ENCODE measurements at regions of chr10 and their contacts with region 1.

Region 1: DNA sequence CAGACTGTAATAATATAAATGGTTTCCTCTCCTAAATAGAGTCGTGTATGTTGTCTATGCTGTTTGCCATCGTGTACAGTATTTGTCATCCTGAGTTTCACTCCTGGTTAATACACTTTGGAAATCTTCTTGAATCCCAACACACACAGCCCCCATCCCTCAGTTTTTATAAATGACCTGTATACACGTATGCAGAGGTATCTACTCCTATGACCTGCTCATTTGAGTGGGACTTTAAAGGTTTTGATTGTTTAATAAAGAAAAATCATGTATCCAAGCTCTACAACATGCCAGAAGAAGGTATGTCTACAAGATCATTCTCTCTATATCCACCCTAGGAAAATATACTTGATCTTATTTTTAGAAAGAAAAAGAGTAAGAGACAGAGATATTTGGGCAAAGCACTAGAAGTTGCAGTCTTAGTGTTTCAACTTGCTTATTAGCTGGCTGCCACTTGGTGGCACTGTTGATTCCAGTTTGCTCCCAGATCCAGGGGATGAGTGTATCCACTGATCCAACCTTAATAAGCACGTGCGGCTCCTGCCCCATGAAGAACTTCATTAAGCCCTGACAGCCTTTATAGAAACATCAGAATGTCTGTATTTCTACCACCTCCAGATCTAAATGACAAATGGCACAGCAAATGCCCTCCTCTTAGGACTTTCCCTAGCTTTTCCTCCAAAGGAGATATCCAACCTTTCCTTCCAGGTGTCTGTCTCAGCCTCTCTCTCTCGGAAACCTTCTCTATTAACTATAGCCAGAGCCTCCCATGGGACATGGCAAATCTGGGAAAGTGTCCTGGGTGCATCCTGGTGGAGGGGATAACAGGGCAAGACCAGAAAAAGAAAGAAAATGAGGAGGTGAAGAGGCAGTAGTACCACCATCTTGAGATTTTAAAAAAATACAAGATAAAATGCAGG is 181.6 kb upstream of the NEBL start:
- DNase-seq: peak; percentile 48
- H3K4me3 Mint-ChIP-seq: no peak overlapping the region
- H3K27ac Mint-ChIP-seq: no peak overlapping the region
- H3K4me1 Mint-ChIP-seq: no peaks in the 10 kb centered on the region
- H3K27me3 Mint-ChIP-seq: peaks cover 4% of the 10 kb centered on the region

Region 2: GRCh38 chr10:20948686-20949327 is 129.9 kb before region 1 on chr10:
- CTCF ChIA-PET with region 1: no interaction called
- POLR2A ChIA-PET with region 1: no interaction called
- intact Hi-C with region 1: no loop called
- DNase-seq: no peak
- H3K4me3 Mint-ChIP-seq: no peak overlapping the region
- H3K27ac Mint-ChIP-seq: no peak overlapping the region
- H3K4me1 Mint-ChIP-seq: no peaks in the 10 kb centered on the region
- H3K27me3 Mint-ChIP-seq: no peaks in the 10 kb centered on the region

Region 3: DNA sequence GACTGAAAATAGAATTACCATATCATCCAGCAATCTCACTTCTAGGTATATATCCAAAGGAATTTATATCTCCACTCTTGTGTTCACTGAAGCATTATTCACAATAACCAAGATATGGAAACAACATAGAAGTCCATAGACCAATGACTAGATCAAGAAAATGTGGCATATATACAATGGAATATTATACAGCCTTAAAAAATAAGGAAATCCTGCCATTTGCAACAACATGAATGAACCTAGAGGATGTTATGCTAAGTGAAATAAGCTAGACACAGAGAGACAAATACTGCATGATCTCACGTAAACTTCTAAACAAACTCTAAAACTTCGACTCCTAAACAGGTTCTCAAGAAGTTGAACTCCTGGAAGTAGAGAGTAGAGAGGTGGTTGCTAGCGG is 192.3 kb after region 1 on chr10:
- CTCF ChIA-PET with region 1: interaction called, 3 read pairs
- POLR2A ChIA-PET with region 1: no interaction called
- intact Hi-C with region 1: loop called (anchors 1 kb)
- DNase-seq: no peak
- H3K4me3 Mint-ChIP-seq: no peak overlapping the region
- H3K27ac Mint-ChIP-seq: no peak overlapping the region
- H3K4me1 Mint-ChIP-seq: no peaks in the 10 kb centered on the region
- H3K27me3 Mint-ChIP-seq: no peaks in the 10 kb centered on the region

Region 4: DNA sequence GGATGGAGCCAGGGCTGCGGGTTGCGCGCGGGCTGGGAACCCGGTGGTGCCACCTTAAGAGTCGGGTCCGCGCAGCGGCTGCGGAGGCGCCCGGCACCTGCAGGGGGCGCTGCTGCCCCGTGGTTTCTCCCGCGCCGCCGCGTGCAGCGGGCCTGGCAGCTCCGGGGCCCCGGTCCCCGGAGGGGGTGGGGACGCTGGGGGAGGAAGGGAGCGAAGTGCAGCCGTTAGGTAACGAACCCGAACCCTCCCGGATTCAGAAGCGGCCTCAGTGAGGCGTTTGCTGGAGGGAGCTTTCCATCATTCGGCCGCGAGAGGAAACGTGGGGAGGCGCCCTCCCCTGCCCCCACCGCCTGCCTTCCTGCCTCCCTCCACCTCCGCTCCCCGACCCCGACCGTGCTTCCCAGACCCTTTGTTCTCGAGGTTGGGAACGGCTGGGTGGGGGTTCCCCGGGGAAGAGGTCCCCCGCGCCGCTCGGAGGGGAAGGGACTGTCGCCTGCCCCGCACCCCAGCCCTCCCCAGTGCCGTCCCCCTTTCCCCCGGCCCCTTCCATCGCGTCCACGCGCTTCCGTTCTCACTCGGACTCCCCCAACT is 417.2 kb after region 1 on chr10:
- CTCF ChIA-PET with region 1: no interaction called
- POLR2A ChIA-PET with region 1: no interaction called
- intact Hi-C with region 1: no loop called
- DNase-seq: peak; percentile 90
- H3K4me3 Mint-ChIP-seq: peak overlapping the region; percentile 71
- H3K27ac Mint-ChIP-seq: no peak overlapping the region
- H3K4me1 Mint-ChIP-seq: peaks cover 12% of the 10 kb centered on the region
- H3K27me3 Mint-ChIP-seq: peaks cover 48% of the 10 kb centered on the region

Measured in activated CD4-positive, alpha-beta memory T cell treated with anti-CD3 and anti-CD28 coated beads for 36 hours (primary cell).